IMR-90 (cell line): ENCODE measurements at regions of chr13 and their contacts with region 1.

Region 1: GRCh38 chr13:96963786-96964475 is 30.3 kb downstream of the OXGR1 start:
- DNase-seq: no peak
- ATAC-seq: no peak
- H3K4me3 ChIP-seq: no peak overlapping the region
- H3K27ac ChIP-seq: no peak overlapping the region
- H3K4me1 ChIP-seq: no peaks in the 10 kb centered on the region
- H3K27me3 ChIP-seq: no peaks in the 10 kb centered on the region
- CTCF ChIP-seq: no peak
- POLR2A ChIP-seq: no peak
- RAD21 ChIP-seq: no peak

Region 2: DNA sequence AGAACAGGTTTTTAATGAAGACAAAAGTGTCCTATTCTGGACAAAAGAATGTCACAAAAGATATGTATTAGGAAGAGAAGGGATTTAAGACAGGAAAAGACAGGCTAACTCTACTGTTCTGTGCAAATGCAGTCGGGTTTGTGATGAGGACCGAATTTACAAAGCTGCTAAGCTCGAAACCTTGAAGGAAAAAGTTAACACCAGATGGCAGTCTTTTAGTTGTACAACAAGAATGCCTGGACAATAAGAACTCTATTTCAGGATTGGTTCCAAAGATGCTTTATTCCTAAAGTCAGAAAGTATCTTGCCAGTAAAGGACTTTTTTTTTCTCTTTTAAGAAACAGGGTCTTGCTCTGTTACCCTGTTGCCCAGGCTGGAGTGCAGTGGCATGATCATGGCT is 822.9 kb before region 1 on chr13:
- CTCF ChIA-PET with region 1: no interaction called
- POLR2A ChIA-PET with region 1: no interaction called
- dilution Hi-C with region 1: no loop called
- in situ Hi-C with region 1: no loop called
- intact Hi-C with region 1: loop called (anchors 5 kb)
- DNase-seq: peak; percentile 2
- ATAC-seq: no peak
- H3K4me3 ChIP-seq: no peak overlapping the region
- H3K27ac ChIP-seq: no peak overlapping the region
- H3K4me1 ChIP-seq: no peaks in the 10 kb centered on the region
- H3K27me3 ChIP-seq: no peaks in the 10 kb centered on the region
- CTCF ChIP-seq: 0 out of 2 replicates have a peak, but pooled peaks have one; percentile 9
- POLR2A ChIP-seq: no peak
- RAD21 ChIP-seq: no peak

Region 3: GRCh38 chr13:97004096-97004876 is 40.4 kb after region 1 on chr13:
- CTCF ChIA-PET with region 1: no interaction called
- POLR2A ChIA-PET with region 1: no interaction called
- dilution Hi-C with region 1: no loop called
- in situ Hi-C with region 1: no loop called
- intact Hi-C with region 1: no loop called
- DNase-seq: peak; percentile 68
- ATAC-seq: peak; percentile 53
- H3K4me3 ChIP-seq: no peak overlapping the region
- H3K27ac ChIP-seq: no peak overlapping the region
- H3K4me1 ChIP-seq: peaks cover 9% of the 10 kb centered on the region
- H3K27me3 ChIP-seq: peaks cover 4% of the 10 kb centered on the region
- CTCF ChIP-seq: no peak
- POLR2A ChIP-seq: no peak
- RAD21 ChIP-seq: no peak